Transverse colon (tissue), 4 donors: ENCODE measurements at regions of chr10 and their contacts with region 1.

Region 1: DNA sequence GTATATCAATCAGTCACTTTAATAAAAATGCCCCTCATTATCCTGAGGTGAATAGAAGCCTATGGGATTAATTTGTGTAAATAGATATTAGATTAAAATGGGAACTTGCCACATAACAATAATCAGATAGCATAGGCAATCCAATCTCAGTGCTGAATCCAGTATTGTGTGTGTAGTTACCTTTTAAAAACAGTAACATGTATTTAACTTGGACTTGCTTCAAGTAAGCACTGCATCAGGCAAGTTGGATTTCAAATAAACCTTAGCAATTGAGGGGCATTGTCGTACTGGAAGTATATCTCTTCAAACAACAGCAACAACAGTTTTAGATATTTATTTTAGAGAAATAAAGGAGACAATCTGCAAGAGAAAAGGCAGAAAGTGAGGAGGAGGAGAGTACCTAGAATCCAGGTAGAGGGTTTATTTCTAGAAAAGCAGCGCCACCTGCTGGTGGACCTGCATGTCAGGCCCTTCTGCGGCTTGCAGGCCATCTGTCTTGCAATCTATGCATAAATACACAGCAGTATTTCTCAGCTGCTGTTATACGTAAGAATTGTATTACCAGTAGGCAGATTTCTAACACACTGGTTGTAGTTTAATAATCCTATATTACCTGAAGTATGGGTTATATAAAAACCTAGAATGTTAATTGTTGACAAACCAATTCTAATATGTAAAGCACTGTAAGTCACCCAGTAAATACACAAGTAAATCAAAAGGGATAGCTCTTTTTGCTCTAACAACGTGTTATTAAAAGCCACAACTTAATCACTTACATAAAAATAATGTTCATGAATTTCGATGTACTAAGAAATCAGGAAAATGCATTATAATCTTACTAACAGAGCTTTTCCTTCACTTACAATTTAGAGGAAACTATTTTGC is 652.8 kb downstream of the KCNMA1 start:
- DNase-seq: peak; percentile 80
- H3K4me3 ChIP-seq: no peak overlapping the region
- H3K27ac ChIP-seq: no peak overlapping the region
- H3K4me1 ChIP-seq: peaks cover 0 to 14% (median 0%) of the 10 kb centered on the region in 4 donors
- H3K27me3 ChIP-seq: no peaks in the 10 kb centered on the region
- CTCF ChIP-seq: peak; percentile 74 to 91 (median 90)
- EP300 ChIP-seq: no peak
- POLR2A ChIP-seq: no peak

Region 2: GRCh38 chr10:76558586-76558985 is 426.2 kb before region 1 on chr10:
- in situ Hi-C with region 1: loop called in 1 of 4 experiments (anchors 25 kb)
- intact Hi-C with region 1: no loop called
- DNase-seq: peak; percentile 32
- H3K4me3 ChIP-seq: no peak overlapping the region
- H3K27ac ChIP-seq: peak overlapping the region; percentile 2 to 76 (median 22)
- H3K4me1 ChIP-seq: peaks cover 0 to 18% (median 5%) of the 10 kb centered on the region in 4 donors
- H3K27me3 ChIP-seq: no peaks in the 10 kb centered on the region
- CTCF ChIP-seq: no peak
- EP300 ChIP-seq: no peak
- POLR2A ChIP-seq: no peak